ENCODE measurements at regions of chr2 and their contacts with region 1.

Region 1: GRCh38 chr2:84865181-84865783 is 15.6 kb downstream of the TRABD2A start:
- DNase-seq: peak; percentile 53
- H3K4me3 ChIP-seq: no peak overlapping the region
- H3K27ac ChIP-seq: no peak overlapping the region
- H3K4me1 ChIP-seq: peaks cover 10% of the 10 kb centered on the region
- H3K27me3 ChIP-seq: no peaks in the 10 kb centered on the region

Region 2: GRCh38 chr2:84338069-84338468 is 527.2 kb before region 1 on chr2:
- in situ Hi-C with region 1: loop called (anchors 25 kb)
- DNase-seq: peak; percentile 71
- H3K4me3 ChIP-seq: no peak overlapping the region
- H3K27ac ChIP-seq: no peak overlapping the region
- H3K4me1 ChIP-seq: peaks cover 15% of the 10 kb centered on the region
- H3K27me3 ChIP-seq: 0 out of 2 replicates have a peak, but pooled peaks cover 4% of the 10 kb centered on the region

Region 3: GRCh38 chr2:85420536-85421259 is 555.4 kb after region 1 on chr2:
- in situ Hi-C with region 1: no loop called
- DNase-seq: peak; percentile 76
- H3K4me3 ChIP-seq: peak overlapping the region; percentile 36
- H3K27ac ChIP-seq: peak overlapping the region; percentile 22
- H3K4me1 ChIP-seq: peaks cover 20% of the 10 kb centered on the region
- H3K27me3 ChIP-seq: no peaks in the 10 kb centered on the region

Measured in GM23248 (cell line).